ENCODE measurements at regions of chrX and their contacts with region 1.

Region 1: GRCh38 chrX:136920001-136920400 is 39.5 kb upstream of the RBMX start:
- DNase-seq: no peak
- ATAC-seq: no peak
- H3K4me3 ChIP-seq: no peak overlapping the region
- H3K27ac ChIP-seq: no peak overlapping the region
- H3K4me1 ChIP-seq: 0 out of 3 replicates have a peak, but pooled peaks cover 2% of the 10 kb centered on the region
- CTCF ChIP-seq: no peak
- EP300 ChIP-seq: no peak
- POLR2A ChIP-seq: no peak
- RAD21 ChIP-seq: no peak

Region 2: DNA sequence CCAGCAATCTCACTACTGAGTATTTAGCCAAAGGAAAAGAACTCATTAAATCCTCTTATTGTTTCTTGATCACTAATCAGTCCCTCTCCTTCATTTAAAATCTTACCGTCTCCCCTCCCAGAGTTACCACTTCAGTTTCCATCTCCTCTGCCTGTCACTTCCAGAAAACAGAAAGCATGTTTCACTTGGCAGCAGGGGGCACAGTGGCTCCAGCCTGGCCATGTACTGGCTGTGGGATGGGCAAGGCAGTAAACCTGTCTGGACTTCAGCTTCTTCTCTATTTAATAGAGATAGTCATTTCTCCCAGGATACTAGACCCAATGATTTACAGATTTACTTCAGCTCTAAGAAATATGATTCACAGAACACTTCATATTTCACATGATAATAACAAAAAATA is 208.9 kb before region 1 on chrX:
- CTCF ChIA-PET with region 1: interaction called, 21 read pairs
- POLR2A ChIA-PET with region 1: interaction called, 6 read pairs
- DNase-seq: peak; percentile 9 to 53
- ATAC-seq: peak; percentile 88 to 91; a peak in 5 of 6 replicates
- H3K4me3 ChIP-seq: no peak overlapping the region
- H3K27ac ChIP-seq: no peak overlapping the region
- H3K4me1 ChIP-seq: peaks cover 6% of the 10 kb centered on the region; the same call in 1 of the 3 replicates
- CTCF ChIP-seq: peak; percentile 51
- EP300 ChIP-seq: no peak
- POLR2A ChIP-seq: no peak
- RAD21 ChIP-seq: peak; percentile 66 to 71

Region 3: GRCh38 chrX:136909706-136910564 is 10.1 kb before region 1 on chrX:
- CTCF ChIA-PET with region 1: interaction called, 22 read pairs
- POLR2A ChIA-PET with region 1: no interaction called
- DNase-seq: peak; percentile 73 to 92
- ATAC-seq: peak; percentile 87 to 89
- H3K4me3 ChIP-seq: peak overlapping the region; percentile 84
- H3K27ac ChIP-seq: peak overlapping the region; percentile 91 to 96
- H3K4me1 ChIP-seq: peaks cover 8% of the 10 kb centered on the region; the same call in 2 of the 3 replicates
- CTCF ChIP-seq: no peak
- EP300 ChIP-seq: no peak
- POLR2A ChIP-seq: peak; percentile 28; the same call in 1 of the 2 replicates
- RAD21 ChIP-seq: no peak

Region 4: GRCh38 chrX:136936183-136936549 is 16.2 kb after region 1 on chrX:
- CTCF ChIA-PET with region 1: interaction called, 16 read pairs
- POLR2A ChIA-PET with region 1: no interaction called
- DNase-seq: no peak
- ATAC-seq: no peak
- H3K4me3 ChIP-seq: no peak overlapping the region
- H3K27ac ChIP-seq: no peak overlapping the region
- H3K4me1 ChIP-seq: no peaks in the 10 kb centered on the region
- CTCF ChIP-seq: no peak
- EP300 ChIP-seq: no peak
- POLR2A ChIP-seq: no peak
- RAD21 ChIP-seq: no peak